ENCODE measurements at regions of chr7 and their contacts with region 1.

Region 1: GRCh38 chr7:38398725-38399321 is 125.4 kb upstream of the TARP start:
- DNase-seq: peak in 8 of 9 donors; percentile 21 to 66 (median 44)
- ATAC-seq: peak; percentile 80
- H3K4me3 ChIP-seq: no peak overlapping the region
- H3K4me3 Mint-ChIP-seq: no peak overlapping the region
- H3K27ac ChIP-seq: no peak overlapping the region
- H3K27ac Mint-ChIP-seq: no peak overlapping the region
- H3K4me1 ChIP-seq: peaks cover 0 to 4% of the 10 kb centered on the region in 2 donors
- H3K4me1 Mint-ChIP-seq: peaks cover 0 to 11% (median 8%) of the 10 kb centered on the region in 7 donors
- H3K27me3 ChIP-seq: no peaks in the 10 kb centered on the region
- H3K27me3 Mint-ChIP-seq: peaks cover 0 to 22% (median 8%) of the 10 kb centered on the region in 5 donors

Region 2: DNA sequence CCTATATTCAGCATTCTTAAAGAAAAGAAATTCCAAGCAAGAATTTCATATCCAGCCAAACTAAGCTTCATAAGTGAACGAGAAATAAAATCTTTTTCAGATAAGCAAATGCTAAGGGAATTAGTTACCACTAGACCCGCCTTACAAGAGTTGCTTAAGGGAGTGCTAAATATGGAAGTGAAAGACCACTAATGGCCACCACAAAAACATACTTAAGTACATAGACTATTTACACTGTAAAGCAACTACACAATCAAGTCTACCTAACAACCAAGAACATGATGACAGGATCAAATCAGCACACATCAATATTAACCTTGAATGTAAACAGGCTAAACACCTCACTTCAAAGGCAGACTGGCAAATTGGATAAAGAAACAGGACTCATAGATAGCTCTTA is 592.7 kb before region 1 on chr7:
- CTCF ChIA-PET with region 1: no interaction called
- POLR2A ChIA-PET with region 1: no interaction called
- intact Hi-C with region 1: no loop called
- DNase-seq: no peak
- ATAC-seq: no peak
- H3K4me3 ChIP-seq: no peak overlapping the region
- H3K4me3 Mint-ChIP-seq: no peak overlapping the region
- H3K27ac ChIP-seq: no peak overlapping the region
- H3K27ac Mint-ChIP-seq: no peak overlapping the region
- H3K4me1 ChIP-seq: no peaks in the 10 kb centered on the region
- H3K4me1 Mint-ChIP-seq: no peaks in the 10 kb centered on the region
- H3K27me3 ChIP-seq: peaks cover 0 to 5% of the 10 kb centered on the region in 2 donors
- H3K27me3 Mint-ChIP-seq: peaks cover 8 to 28% (median 24%) of the 10 kb centered on the region in 5 donors

Region 3: DNA sequence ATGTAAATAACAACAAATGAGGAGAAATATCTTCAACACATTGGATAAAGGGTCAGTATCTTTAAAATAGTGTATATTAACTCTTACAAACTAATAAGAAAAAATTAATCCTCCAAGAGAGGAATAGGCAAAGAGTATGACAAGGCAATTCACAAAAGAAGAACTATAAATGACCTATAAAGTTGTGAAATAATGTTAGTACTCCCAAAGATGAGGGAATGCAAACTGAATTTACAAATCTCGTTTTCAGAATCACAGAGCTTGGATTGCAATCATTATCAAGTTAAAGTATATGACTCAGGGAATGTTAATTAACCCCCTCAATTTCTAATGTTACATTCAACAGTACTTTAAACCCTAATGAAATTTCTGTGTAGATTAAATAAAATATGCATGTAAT is 38.0 kb before region 1 on chr7:
- CTCF ChIA-PET with region 1: no interaction called
- POLR2A ChIA-PET with region 1: no interaction called
- intact Hi-C with region 1: no loop called
- DNase-seq: no peak
- ATAC-seq: no peak
- H3K4me3 ChIP-seq: no peak overlapping the region
- H3K4me3 Mint-ChIP-seq: peak overlapping the region; percentile 64 to 100 (median 94)
- H3K27ac ChIP-seq: peak overlapping the region; percentile 58
- H3K27ac Mint-ChIP-seq: peak overlapping the region in 8 of 9 donors; percentile 70 to 99 (median 95)
- H3K4me1 ChIP-seq: peaks cover 15 to 24% of the 10 kb centered on the region in 2 donors
- H3K4me1 Mint-ChIP-seq: peaks cover 28 to 82% (median 49%) of the 10 kb centered on the region in 7 donors
- H3K27me3 ChIP-seq: no peaks in the 10 kb centered on the region
- H3K27me3 Mint-ChIP-seq: no peaks in the 10 kb centered on the region

Region 4: GRCh38 chr7:38492010-38492409 is 93.2 kb after region 1 on chr7:
- CTCF ChIA-PET with region 1: no interaction called
- POLR2A ChIA-PET with region 1: no interaction called
- intact Hi-C with region 1: no loop called
- DNase-seq: no peak
- ATAC-seq: no peak
- H3K4me3 ChIP-seq: no peak overlapping the region
- H3K4me3 Mint-ChIP-seq: no peak overlapping the region
- H3K27ac ChIP-seq: no peak overlapping the region
- H3K27ac Mint-ChIP-seq: no peak overlapping the region
- H3K4me1 ChIP-seq: no peaks in the 10 kb centered on the region
- H3K4me1 Mint-ChIP-seq: no peaks in the 10 kb centered on the region
- H3K27me3 ChIP-seq: no peaks in the 10 kb centered on the region
- H3K27me3 Mint-ChIP-seq: peaks cover 0 to 19% (median 9%) of the 10 kb centered on the region in 5 donors

Region 5: DNA sequence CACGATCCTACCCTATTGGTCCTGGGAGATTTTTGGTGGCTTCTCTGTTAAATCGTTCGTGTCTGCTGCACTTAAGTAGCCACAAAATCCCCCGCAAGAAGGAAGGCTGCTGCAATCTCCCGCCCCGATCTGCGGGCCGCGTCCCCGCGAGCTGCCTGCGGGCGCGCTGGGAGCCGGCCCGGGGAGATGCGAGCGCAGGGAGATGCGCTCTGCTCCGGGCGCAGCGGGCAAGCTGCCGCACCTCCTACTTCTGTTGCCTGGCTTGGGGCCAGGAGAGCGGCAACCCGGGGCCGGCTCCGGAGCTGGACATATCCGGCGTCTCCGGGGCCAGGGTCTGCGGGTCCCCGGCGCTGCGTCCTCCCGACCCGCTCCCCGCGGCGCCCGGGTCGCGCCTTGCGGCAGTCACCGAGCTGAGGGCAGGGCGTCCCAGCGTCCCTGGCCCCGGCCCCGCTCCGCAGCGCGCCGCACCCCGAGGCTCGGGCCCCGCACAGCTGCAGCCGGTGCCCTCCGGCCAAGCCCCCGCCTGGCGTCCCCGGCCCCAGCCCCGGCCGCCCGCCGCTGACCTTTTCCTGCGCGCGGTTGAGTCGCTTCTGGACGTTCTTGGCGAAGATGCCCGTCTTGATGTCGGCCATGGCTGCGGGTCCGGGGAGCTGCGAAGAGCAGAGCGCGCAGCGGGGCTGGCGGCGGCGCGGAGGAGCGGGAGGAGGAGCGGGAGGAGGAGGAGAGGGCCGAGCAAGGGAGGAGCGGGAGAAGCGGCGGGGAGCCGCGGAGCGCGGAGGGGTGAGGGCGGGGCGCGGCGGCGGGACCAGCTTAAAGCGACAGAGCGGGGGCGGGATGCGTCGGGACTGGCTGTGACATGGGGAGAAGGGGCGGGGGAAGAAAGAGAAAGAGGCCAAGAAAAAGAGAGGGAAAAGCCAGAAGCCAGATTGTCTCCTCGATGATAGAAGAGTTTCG is 232.2 kb after region 1 on chr7 and contains the start of gene AMPH:
- CTCF ChIA-PET with region 1: interaction called, 13 read pairs
- POLR2A ChIA-PET with region 1: no interaction called
- intact Hi-C with region 1: loop called in 1 of 2 experiments (anchors 1 kb)
- DNase-seq: peak in 2 of 9 donors; percentile 2 to 3
- ATAC-seq: no peak
- H3K4me3 ChIP-seq: no peak within 1 kb of the TSS
- H3K4me3 Mint-ChIP-seq: peak within 1 kb of the TSS; percentile 53 to 82 (median 76)
- H3K27ac ChIP-seq: no peak within 1 kb of the TSS
- H3K27ac Mint-ChIP-seq: no peak within 1 kb of the TSS
- H3K4me1 ChIP-seq: no peaks in the 10 kb centered on the region
- H3K4me1 Mint-ChIP-seq: peaks cover 0 to 22% (median 11%) of the 10 kb centered on the region in 7 donors
- H3K27me3 ChIP-seq: no peaks in the 10 kb centered on the region
- H3K27me3 Mint-ChIP-seq: peaks cover 40 to 67% (median 56%) of the 10 kb centered on the region in 5 donors
- total RNA-seq, gene AMPH: not detected

Region 6: DNA sequence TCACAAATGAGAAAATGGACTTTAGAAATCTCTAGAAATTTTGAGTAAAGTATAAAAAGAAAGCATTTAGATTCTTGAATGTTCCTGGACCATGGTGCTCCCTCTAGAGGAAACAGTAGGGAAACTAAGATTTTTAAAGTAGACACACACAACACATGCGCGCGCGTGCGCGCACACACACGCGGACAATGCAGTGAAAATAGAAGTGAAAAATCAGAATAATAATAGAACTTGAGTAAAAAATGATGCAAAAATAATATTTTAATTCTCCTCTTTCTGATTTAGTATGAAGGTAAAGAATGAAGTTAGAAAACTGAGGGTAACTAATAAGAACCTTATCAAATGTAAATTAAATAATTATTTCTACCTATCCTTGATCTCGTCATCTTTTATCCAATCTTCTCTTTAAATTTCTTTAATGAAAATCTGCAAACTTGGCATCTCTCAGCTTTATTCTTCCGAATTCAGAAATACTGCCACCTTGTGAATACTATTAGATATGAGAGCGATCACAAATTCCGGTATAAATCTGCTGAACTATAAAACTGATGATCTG is 349.3 kb after region 1 on chr7:
- CTCF ChIA-PET with region 1: no interaction called
- POLR2A ChIA-PET with region 1: no interaction called
- intact Hi-C with region 1: loop called in 1 of 2 experiments (anchors 1 kb)
- DNase-seq: no peak
- ATAC-seq: no peak
- H3K4me3 ChIP-seq: no peak overlapping the region
- H3K4me3 Mint-ChIP-seq: no peak overlapping the region
- H3K27ac ChIP-seq: no peak overlapping the region
- H3K27ac Mint-ChIP-seq: no peak overlapping the region
- H3K4me1 ChIP-seq: no peaks in the 10 kb centered on the region
- H3K4me1 Mint-ChIP-seq: no peaks in the 10 kb centered on the region
- H3K27me3 ChIP-seq: no peaks in the 10 kb centered on the region
- H3K27me3 Mint-ChIP-seq: no peaks in the 10 kb centered on the region

Region 7: DNA sequence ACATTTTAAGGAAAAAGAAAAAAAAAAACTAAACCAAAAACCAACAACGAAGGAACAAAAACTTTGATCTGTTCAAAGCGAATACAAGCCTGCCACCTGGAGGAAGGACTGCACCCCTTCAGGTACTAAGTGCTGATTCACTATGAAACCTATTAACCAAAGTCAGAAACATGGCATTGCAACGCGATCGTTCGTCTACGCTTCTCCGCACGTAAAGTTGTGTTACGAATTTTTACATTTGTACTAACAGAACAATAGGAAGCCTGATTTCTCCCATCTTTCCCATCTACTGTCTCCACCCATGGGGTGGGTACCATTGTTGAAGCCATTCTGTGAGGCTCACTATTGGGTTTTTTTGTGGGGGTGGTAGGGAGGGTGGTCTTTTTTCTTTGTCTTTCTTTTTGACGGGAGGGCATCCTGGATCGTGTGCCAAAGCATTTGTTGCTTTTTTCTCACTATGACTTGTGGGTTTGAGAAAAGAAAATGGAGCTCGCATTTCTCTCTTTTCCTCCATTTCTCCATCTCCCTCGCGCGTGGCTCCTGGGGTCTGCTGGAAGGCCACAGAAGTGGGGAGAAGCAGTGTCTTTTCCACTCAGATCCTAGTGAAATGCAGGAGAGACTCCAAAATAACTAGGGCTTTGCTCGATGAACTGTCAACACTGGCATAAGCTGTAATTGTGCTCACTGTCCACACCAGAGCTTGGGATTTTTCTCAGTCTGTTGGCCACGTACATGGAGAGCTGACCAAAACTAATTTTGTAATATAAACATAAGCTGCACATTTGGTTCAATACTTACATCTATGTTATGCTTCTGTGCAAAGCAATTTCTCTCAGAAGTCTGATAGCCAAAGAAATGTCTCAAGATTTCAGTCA is 1066.5 kb after region 1 on chr7:
- CTCF ChIA-PET with region 1: no interaction called
- POLR2A ChIA-PET with region 1: no interaction called
- intact Hi-C with region 1: loop called (anchors 1 to 5 kb)
- DNase-seq: peak in 7 of 9 donors; percentile 7 to 36 (median 27)
- ATAC-seq: peak; percentile 57
- H3K4me3 ChIP-seq: no peak overlapping the region
- H3K4me3 Mint-ChIP-seq: peak overlapping the region in 1 of 10 donors; percentile 26
- H3K27ac ChIP-seq: no peak overlapping the region
- H3K27ac Mint-ChIP-seq: no peak overlapping the region
- H3K4me1 ChIP-seq: no peaks in the 10 kb centered on the region
- H3K4me1 Mint-ChIP-seq: peaks cover 0 to 6% (median 5%) of the 10 kb centered on the region in 7 donors
- H3K27me3 ChIP-seq: no peaks in the 10 kb centered on the region
- H3K27me3 Mint-ChIP-seq: peaks cover 7 to 48% (median 21%) of the 10 kb centered on the region in 5 donors

Measured in naive thymus-derived CD4-positive, alpha-beta T cell (primary cell).